Activated naive CD8-positive, alpha-beta T cell treated with anti-CD3 and anti-CD28 coated beads, Interleukin-2, amount 10 ng/mL, durations not matched to agents 7 days and 5 days (primary cell): ENCODE measurements at regions of chr2 and their contacts with region 1.

Region 1: GRCh38 chr2:128027801-128028667 is at the start of gene SAP130:
- DNase-seq: peak; percentile 98
- ATAC-seq: peak; percentile 69
- H3K4me3 Mint-ChIP-seq: peak within 1 kb of the TSS; percentile 99
- H3K27ac Mint-ChIP-seq: peak within 1 kb of the TSS; percentile 93
- H3K4me1 Mint-ChIP-seq: peaks cover 26% of the 10 kb centered on the region
- H3K27me3 Mint-ChIP-seq: peaks cover 5% of the 10 kb centered on the region
- total RNA-seq, gene SAP130: 37.8 to 41.4 TPM

Region 2: DNA sequence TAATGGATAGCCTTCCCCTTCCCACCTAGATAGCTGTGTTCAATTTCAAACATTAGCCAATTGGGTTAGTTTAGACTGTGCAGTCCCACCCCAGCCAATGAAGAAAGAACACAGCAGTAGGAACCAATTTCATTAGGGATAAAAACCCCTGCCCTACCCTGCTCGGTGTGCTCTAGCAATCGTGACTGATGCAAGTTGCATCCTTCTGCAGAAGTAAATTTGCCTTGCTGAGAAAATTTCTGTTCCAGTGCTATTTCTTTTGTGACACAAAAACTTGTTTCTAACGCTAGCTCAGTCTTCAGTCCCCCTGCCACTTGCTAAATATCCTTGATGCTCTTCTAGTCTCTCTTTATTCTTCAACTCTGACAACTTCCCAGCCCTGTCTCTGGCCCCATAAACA is 15.0 kb after region 1 on chr2:
- POLR2A ChIA-PET with region 1: no interaction called
- DNase-seq: no peak
- ATAC-seq: no peak
- H3K4me3 Mint-ChIP-seq: no peak overlapping the region
- H3K27ac Mint-ChIP-seq: no peak overlapping the region
- H3K4me1 Mint-ChIP-seq: no peaks in the 10 kb centered on the region
- H3K27me3 Mint-ChIP-seq: peaks cover 6% of the 10 kb centered on the region

Region 3: GRCh38 chr2:128054104-128054503 is 26.1 kb after region 1 on chr2:
- POLR2A ChIA-PET with region 1: no interaction called
- DNase-seq: no peak
- ATAC-seq: no peak
- H3K4me3 Mint-ChIP-seq: no peak overlapping the region
- H3K27ac Mint-ChIP-seq: no peak overlapping the region
- H3K4me1 Mint-ChIP-seq: no peaks in the 10 kb centered on the region
- H3K27me3 Mint-ChIP-seq: peaks cover 25% of the 10 kb centered on the region

Region 4: DNA sequence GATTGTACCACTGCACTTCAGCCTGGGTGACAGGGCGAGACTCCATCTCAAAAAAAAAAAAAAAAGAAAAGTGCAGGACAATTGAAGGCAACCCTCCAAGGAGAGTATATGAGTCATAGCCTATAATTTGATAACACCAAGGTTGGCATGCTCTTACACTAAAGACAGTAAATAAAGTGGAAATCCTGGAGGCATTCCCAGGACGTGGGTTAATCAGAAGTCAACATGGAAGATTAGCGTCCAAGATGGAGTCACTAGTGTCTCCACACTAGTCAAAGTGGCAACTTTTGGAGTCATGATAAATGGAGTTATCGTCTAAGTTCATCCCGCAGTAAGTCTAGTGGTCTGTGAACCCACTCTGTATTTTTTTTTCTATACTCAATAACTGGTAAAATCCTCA is 41.7 kb after region 1 on chr2:
- POLR2A ChIA-PET with region 1: no interaction called
- DNase-seq: no peak
- ATAC-seq: no peak
- H3K4me3 Mint-ChIP-seq: no peak overlapping the region
- H3K27ac Mint-ChIP-seq: no peak overlapping the region
- H3K4me1 Mint-ChIP-seq: no peaks in the 10 kb centered on the region
- H3K27me3 Mint-ChIP-seq: no peaks in the 10 kb centered on the region

Region 5: DNA sequence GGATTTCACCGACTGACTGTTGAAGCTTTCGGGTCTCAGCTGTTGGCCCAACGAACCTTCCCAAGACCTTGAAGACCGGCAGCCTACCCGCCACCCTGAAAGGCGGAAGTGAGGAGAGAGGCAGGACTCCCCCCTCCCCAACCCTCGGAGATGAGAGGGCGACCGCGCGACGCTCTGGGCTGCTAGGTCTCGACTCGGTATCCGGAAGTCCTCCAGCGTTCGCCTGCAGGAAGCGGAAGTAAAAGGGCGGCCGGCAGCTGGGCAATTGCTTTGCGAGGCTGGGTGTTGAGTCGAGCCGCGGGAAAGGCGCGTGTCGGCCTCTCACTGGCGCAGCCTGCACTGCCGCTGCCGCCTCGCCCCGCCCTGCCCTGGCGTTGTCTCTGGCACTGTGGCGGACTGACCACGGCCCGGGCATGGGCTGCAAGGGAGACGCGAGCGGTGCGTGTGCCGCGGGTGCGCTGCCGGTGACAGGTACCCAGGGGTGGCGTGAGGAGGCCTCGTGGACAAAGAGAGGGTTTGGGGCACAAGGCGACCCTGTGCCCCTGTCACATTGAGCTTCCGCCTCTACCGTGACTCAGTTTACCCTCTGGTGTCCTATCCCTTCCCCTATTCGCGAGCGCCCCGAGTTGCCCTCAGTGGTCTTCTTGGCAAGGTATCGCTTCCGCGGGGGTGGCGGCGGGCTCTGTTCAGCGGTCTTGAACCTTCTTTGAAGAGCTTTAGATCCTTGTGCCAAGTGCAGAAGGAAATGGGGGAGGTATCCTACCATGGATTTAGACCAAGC is 63.1 kb after region 1 on chr2 and contains the start of gene UGGT1:
- POLR2A ChIA-PET with region 1: interaction called, 53 read pairs
- DNase-seq: peak; percentile 88
- ATAC-seq: peak; percentile 95
- H3K4me3 Mint-ChIP-seq: peak within 1 kb of the TSS; percentile 90
- H3K27ac Mint-ChIP-seq: peak within 1 kb of the TSS; percentile 94
- H3K4me1 Mint-ChIP-seq: peaks cover 32% of the 10 kb centered on the region
- H3K27me3 Mint-ChIP-seq: no peaks in the 10 kb centered on the region
- total RNA-seq, gene UGGT1: 55.4 to 56.5 TPM